ENCODE measurements at regions of chr19 and their contacts with region 1.

Region 1: GRCh38 chr19:40444192-40445028 is at the start of gene SERTAD3:
- DNase-seq: peak; percentile 98
- H3K4me3 ChIP-seq: peak within 1 kb of the TSS; percentile 85
- H3K27ac ChIP-seq: peak within 1 kb of the TSS; percentile 88
- H3K4me1 ChIP-seq: peaks cover 21% of the 10 kb centered on the region
- CTCF ChIP-seq: peak; percentile 72
- total RNA-seq, gene SERTAD3: 12.2 and 15.7 TPM in 2 replicates

Region 2: DNA sequence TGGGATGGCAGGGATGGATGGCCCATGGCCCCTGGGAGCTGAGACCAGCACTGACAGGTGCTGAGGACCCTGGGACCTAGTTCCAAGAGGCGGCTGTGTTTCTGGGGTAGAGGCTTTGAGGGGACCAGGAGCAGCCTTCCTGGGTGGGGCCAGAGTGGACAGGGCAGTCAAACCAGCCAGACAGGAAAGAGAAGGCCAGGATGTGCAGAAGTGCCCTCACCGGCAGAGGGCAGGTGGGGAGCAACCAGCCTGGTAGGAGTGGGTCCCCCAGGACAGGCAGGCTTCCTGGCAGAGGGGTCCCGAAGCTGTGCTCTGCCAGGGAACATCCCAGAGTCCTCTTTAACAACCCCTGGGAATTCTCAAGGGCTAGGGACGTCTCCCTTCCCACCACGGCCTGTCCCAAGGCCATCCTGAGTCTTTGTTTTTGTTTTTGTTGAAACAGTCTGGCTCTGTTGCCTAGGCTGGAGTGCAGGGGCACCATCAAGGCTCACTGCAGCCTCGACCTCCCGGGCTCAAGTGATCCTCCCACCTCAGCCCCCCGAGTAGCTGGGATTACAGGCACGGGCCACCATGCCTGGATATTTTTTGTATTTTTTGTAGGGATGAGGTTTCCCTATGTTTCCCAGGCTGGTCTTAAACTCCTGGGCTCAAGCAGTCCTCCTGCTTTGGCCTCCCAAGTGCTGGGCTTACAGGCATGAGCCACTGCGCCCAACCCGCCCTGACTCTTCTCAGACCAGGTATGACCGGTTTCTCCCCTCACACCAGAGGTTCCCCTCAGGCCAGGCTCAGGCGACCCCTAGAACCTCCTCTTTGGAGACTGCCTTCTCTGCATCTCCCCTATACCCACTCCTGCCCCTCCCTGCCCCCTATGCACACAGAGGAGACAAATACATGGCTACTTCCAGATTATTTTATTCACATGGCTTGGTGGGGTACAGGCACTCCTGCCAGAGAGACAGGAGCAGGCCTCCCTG is 51.3 kb before region 1 on chr19:
- CTCF ChIA-PET with region 1: no interaction called
- POLR2A ChIA-PET with region 1: no interaction called
- intact Hi-C with region 1: loop called (anchors 1 kb)
- DNase-seq: peak; percentile 51
- H3K4me3 ChIP-seq: no peak overlapping the region
- H3K27ac ChIP-seq: no peak overlapping the region
- H3K4me1 ChIP-seq: peaks cover under 1% of the 10 kb centered on the region
- CTCF ChIP-seq: peak; percentile 63

Region 3: DNA sequence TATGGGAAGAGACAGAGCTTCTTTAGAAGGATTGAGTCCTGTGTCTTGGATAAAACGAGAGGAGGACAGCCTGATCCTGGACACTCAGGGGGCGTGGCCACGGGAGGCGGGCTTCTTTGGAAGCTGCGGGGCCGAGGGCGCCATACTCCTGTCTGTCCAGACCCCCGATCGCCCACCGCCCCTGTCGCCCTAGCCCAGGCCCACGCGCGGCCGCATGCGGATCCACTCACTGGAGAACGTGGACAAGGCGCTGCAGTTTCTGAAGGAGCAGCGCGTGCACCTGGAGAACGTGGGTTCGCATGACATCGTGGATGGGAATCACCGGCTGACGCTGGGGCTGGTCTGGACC is 45.4 kb after region 1 on chr19:
- CTCF ChIA-PET with region 1: no interaction called
- POLR2A ChIA-PET with region 1: no interaction called
- intact Hi-C with region 1: no loop called
- DNase-seq: no peak
- H3K4me3 ChIP-seq: no peak overlapping the region
- H3K27ac ChIP-seq: no peak overlapping the region
- H3K4me1 ChIP-seq: no peaks in the 10 kb centered on the region
- CTCF ChIP-seq: no peak

Measured in OCI-LY7 (cell line).